ENCODE measurements at regions of chr2 and their contacts with region 1.

Region 1: GRCh38 chr2:210072922-210073509 is 70.6 kb downstream of the RPE start:
- DNase-seq: peak; percentile 3 to 27 (median 14)
- ATAC-seq: peak; percentile 69; the same call in 2 of the 3 replicates
- H3K4me3 ChIP-seq: no peak overlapping the region
- H3K27ac ChIP-seq: no peak overlapping the region
- H3K4me1 ChIP-seq: no peaks in the 10 kb centered on the region
- H3K27me3 ChIP-seq: no peaks in the 10 kb centered on the region
- CTCF ChIP-seq: peak in 2 of 3 experiments; percentile 40 to 49; a peak in 3 of 6 replicates
- EP300 ChIP-seq: no peak
- POLR2A ChIP-seq: no peak
- RAD21 ChIP-seq: peak in 1 of 2 experiments; percentile 48; a peak in 2 of 4 replicates

Region 2: DNA sequence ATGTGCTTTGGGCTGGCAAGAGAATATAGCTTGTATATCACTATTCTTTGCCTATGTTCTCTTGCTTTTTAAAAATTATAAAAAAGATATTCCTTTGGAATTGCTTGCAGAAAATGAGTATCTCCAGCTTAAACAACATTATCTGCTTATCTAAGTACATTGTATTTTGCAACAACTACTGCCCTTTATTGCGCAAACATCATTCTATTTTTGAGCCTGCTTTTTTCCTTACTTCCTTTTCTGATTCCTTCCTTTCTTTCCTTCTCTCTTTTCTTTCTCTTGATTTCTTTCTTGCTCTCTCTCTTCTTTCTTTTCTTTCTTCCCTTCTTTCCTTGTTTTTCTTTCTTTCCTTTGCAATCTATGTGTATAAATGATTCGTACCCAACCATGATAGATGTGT is 227.3 kb before region 1 on chr2:
- CTCF ChIA-PET with region 1: no interaction called
- POLR2A ChIA-PET with region 1: no interaction called
- in situ Hi-C with region 1: no loop called
- intact Hi-C with region 1: no loop called
- DNase-seq: no peak
- ATAC-seq: no peak
- H3K4me3 ChIP-seq: no peak overlapping the region
- H3K27ac ChIP-seq: no peak overlapping the region
- H3K4me1 ChIP-seq: no peaks in the 10 kb centered on the region
- H3K27me3 ChIP-seq: no peaks in the 10 kb centered on the region
- CTCF ChIP-seq: no peak
- EP300 ChIP-seq: no peak
- POLR2A ChIP-seq: no peak
- RAD21 ChIP-seq: no peak

Region 3: GRCh38 chr2:209977386-209978239 is 95.4 kb before region 1 on chr2:
- CTCF ChIA-PET with region 1: no interaction called
- POLR2A ChIA-PET with region 1: no interaction called
- in situ Hi-C with region 1: no loop called
- intact Hi-C with region 1: loop called (anchors 5 kb)
- DNase-seq: peak in 2 of 4 experiments; percentile 22 to 34
- ATAC-seq: peak; percentile 51; the same call in 2 of the 3 replicates
- H3K4me3 ChIP-seq: no peak overlapping the region
- H3K27ac ChIP-seq: no peak overlapping the region
- H3K4me1 ChIP-seq: no peaks in the 10 kb centered on the region; a peak in 1 of 5 replicates
- H3K27me3 ChIP-seq: peaks cover 0 to 7% of the 10 kb centered on the region in 2 experiments; a peak in 1 of 5 replicates
- CTCF ChIP-seq: peak in 2 of 3 experiments; percentile 34 to 63; a peak in 3 of 6 replicates
- EP300 ChIP-seq: no peak
- POLR2A ChIP-seq: no peak
- RAD21 ChIP-seq: peak; percentile 81 to 82

Region 4: DNA sequence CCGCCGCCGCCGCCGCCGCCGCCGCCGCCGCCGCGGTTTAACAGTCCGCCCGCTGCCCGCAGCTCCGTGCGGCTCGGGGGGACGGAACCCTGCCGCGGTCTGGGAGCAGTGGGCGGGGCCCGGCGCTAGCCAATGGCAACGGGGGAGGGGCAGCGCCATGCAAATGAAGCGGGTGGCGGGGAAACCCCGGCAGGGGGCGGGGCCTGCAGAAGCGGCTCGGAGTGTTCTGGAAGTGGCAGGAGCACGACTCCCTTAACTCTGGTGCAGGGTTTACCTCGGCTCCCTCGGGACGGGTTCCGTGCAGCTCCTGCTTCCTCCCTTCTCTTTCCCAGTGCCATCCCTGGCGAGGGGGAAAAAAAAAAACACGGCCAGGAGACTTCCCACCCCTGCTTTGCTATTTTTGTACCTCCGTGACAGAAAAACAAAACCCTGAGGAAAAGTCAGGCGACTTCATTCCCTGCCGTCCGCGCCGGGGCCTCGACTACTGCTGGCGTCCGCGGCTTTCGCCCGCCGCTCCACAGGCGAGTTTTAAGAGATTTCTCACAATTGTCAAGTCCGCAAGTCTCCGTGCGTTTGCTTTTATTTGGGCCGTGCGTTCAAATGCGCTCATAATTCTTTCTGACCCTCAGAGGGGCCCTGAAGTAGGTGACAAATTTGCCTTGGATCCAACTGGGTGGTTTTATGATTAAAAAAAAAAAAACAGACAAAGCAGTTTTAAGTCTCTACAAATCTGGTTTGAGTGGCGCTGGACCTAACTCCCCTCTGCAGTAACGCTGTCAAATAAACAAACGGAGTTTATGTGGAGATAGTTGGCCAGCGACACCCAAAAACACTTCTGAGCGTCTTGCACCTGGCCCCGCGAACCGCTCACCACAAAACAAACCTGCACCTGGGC is 98.5 kb after region 1 on chr2 and contains the start of gene KANSL1L:
- CTCF ChIA-PET with region 1: no interaction called
- POLR2A ChIA-PET with region 1: no interaction called
- in situ Hi-C with region 1: no loop called
- intact Hi-C with region 1: loop called (anchors 5 kb)
- DNase-seq: peak; percentile 85 to 93 (median 88)
- ATAC-seq: peak; percentile 89
- H3K4me3 ChIP-seq: peak within 1 kb of the TSS; percentile 72
- H3K27ac ChIP-seq: peak within 1 kb of the TSS; percentile 85
- H3K4me1 ChIP-seq: no peaks in the 10 kb centered on the region
- H3K27me3 ChIP-seq: no peaks in the 10 kb centered on the region
- CTCF ChIP-seq: no peak
- EP300 ChIP-seq: no peak
- POLR2A ChIP-seq: 0 out of 2 replicates have a peak, but pooled peaks have one; percentile 43
- RAD21 ChIP-seq: no peak
- polyA plus RNA-seq, gene KANSL1L: 1.3 to 1.4 TPM

Measured in K562 (cell line).